Endothelial cell of umbilical vein (primary cell): ENCODE measurements at regions of chr21 and their contacts with region 1.

Region 1: GRCh38 chr21:33924079-33924765 is 8.6 kb upstream of the ATP5PO start:
- DNase-seq: peak; percentile 78
- H3K4me3 ChIP-seq: no peak overlapping the region
- H3K27ac ChIP-seq: no peak overlapping the region
- H3K4me1 ChIP-seq: no peaks in the 10 kb centered on the region
- H3K27me3 ChIP-seq: peaks cover 5 to 6% of the 10 kb centered on the region in 2 experiments
- CTCF ChIP-seq: peak; percentile 85 to 86
- POLR2A ChIP-seq: no peak

Region 2: DNA sequence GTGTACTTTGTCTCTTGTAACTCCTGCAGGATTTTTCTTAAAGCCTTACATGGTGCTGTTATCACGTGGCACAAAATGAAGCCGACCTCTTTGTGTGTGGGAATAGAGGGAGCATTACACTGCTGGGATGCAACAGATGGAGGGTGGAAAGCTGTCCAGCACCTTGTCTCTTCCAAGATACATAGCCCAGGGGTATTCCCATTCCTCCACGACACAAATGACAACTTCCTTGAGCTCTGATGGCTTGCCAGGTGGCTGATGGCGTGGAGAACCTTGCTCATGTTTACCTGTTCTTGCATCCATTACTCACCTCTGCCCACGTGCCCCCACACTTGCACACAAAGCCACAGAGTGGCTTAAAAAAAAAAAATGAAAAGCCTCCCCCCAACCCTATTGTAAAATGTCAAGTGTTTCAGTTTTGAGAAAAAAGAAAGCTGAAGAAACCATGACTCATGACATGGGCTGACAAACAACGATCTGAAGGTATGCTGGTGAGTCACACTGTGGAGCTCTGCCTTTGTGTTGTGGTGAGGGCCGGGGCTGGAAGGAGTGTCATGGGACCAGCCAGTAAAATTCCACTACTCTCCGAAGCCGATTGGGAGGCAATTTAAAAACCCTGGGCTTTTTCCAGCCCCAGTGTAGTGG is 23.4 kb after region 1 on chr21:
- CTCF ChIA-PET with region 1: interaction called, 34 read pairs
- POLR2A ChIA-PET with region 1: no interaction called
- dilution Hi-C with region 1: no loop called
- intact Hi-C with region 1: no loop called
- DNase-seq: peak; percentile 95
- H3K4me3 ChIP-seq: peak overlapping the region in 1 of 3 experiments; percentile 43
- H3K27ac ChIP-seq: peak overlapping the region; percentile 80
- H3K4me1 ChIP-seq: peaks cover 19% of the 10 kb centered on the region
- H3K27me3 ChIP-seq: no peaks in the 10 kb centered on the region
- CTCF ChIP-seq: no peak
- POLR2A ChIP-seq: no peak

Region 3: GRCh38 chr21:34073032-34073869 is 149.0 kb after region 1 on chr21 and contains the starts of genes MRPS6 and SLC5A3:
- CTCF ChIA-PET with region 1: interaction called, 38 read pairs
- POLR2A ChIA-PET with region 1: no interaction called
- dilution Hi-C with region 1: no loop called
- intact Hi-C with region 1: loop called (anchors 2 kb)
- DNase-seq: peak; percentile 81
- H3K4me3 ChIP-seq: peak within 1 kb of the TSS; percentile 79 to 83 (median 80)
- H3K27ac ChIP-seq: peak within 1 kb of the TSS; percentile 65
- H3K4me1 ChIP-seq: peaks cover 10% of the 10 kb centered on the region
- H3K27me3 ChIP-seq: peaks cover 0 to 1% of the 10 kb centered on the region in 2 experiments
- CTCF ChIP-seq: no peak
- POLR2A ChIP-seq: peak; percentile 88
- total RNA-seq, gene MRPS6: 35.5 and 37.2 TPM in 2 replicates
- total RNA-seq, gene SLC5A3: 6.8 and 8.0 TPM in 2 replicates

Region 4: GRCh38 chr21:34129039-34129891 is 205.0 kb after region 1 on chr21:
- CTCF ChIA-PET with region 1: interaction called, 26 read pairs
- POLR2A ChIA-PET with region 1: no interaction called
- dilution Hi-C with region 1: no loop called
- intact Hi-C with region 1: no loop called
- DNase-seq: peak; percentile 79
- H3K4me3 ChIP-seq: no peak overlapping the region
- H3K27ac ChIP-seq: no peak overlapping the region
- H3K4me1 ChIP-seq: peaks cover 6% of the 10 kb centered on the region
- H3K27me3 ChIP-seq: no peaks in the 10 kb centered on the region
- CTCF ChIP-seq: peak in 1 of 2 donors; percentile 49
- POLR2A ChIP-seq: no peak

Region 5: DNA sequence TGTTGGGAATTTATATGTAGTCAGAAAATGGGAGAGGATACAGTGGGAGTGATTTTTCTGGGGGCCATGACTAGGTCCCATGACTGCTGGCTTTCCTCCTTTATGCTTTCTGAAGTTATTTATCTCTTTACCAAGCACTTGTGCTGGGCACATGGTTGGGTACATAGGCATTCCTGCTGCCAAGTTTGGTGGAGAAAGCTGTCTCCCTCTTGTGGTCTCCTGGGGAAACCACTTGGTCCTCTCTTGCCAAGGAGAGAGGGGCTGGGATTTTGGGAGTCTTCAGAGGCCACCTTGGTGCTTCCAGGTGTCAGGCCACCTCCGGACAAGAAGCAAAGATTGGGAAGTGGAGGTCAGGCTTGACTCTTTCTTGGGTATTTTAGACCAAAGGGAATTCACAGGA is 319.3 kb after region 1 on chr21:
- CTCF ChIA-PET with region 1: interaction called, 136 read pairs
- POLR2A ChIA-PET with region 1: no interaction called
- dilution Hi-C with region 1: no loop called
- intact Hi-C with region 1: loop called (anchors 1 kb)
- DNase-seq: peak; percentile 31
- H3K4me3 ChIP-seq: no peak overlapping the region
- H3K27ac ChIP-seq: no peak overlapping the region
- H3K4me1 ChIP-seq: no peaks in the 10 kb centered on the region
- H3K27me3 ChIP-seq: peaks cover 2 to 5% of the 10 kb centered on the region in 2 experiments
- CTCF ChIP-seq: peak; percentile 53 to 62
- POLR2A ChIP-seq: no peak

Region 6: GRCh38 chr21:34367321-34367935 is 443.2 kb after region 1 on chr21:
- CTCF ChIA-PET with region 1: interaction called, 867 read pairs
- POLR2A ChIA-PET with region 1: no interaction called
- dilution Hi-C with region 1: no loop called
- intact Hi-C with region 1: no loop called
- DNase-seq: peak; percentile 55
- H3K4me3 ChIP-seq: no peak overlapping the region
- H3K27ac ChIP-seq: no peak overlapping the region
- H3K4me1 ChIP-seq: no peaks in the 10 kb centered on the region
- H3K27me3 ChIP-seq: peaks cover 11 to 12% of the 10 kb centered on the region in 2 experiments
- CTCF ChIP-seq: peak; percentile 46 to 53
- POLR2A ChIP-seq: no peak